ENCODE measurements at regions of chr7 and their contacts with region 1.

Region 1: GRCh38 chr7:126079581-126079980 is 1150.0 kb upstream of the POT1 start:
- DNase-seq: no peak
- ATAC-seq: no peak
- H3K4me3 ChIP-seq: no peak overlapping the region
- H3K4me3 Mint-ChIP-seq: no peak overlapping the region
- H3K27ac ChIP-seq: no peak overlapping the region
- H3K27ac Mint-ChIP-seq: no peak overlapping the region
- H3K4me1 ChIP-seq: no peaks in the 10 kb centered on the region
- H3K4me1 Mint-ChIP-seq: no peaks in the 10 kb centered on the region
- H3K27me3 ChIP-seq: no peaks in the 10 kb centered on the region
- H3K27me3 Mint-ChIP-seq: no peaks in the 10 kb centered on the region
- CTCF ChIP-seq: no peak

Region 2: DNA sequence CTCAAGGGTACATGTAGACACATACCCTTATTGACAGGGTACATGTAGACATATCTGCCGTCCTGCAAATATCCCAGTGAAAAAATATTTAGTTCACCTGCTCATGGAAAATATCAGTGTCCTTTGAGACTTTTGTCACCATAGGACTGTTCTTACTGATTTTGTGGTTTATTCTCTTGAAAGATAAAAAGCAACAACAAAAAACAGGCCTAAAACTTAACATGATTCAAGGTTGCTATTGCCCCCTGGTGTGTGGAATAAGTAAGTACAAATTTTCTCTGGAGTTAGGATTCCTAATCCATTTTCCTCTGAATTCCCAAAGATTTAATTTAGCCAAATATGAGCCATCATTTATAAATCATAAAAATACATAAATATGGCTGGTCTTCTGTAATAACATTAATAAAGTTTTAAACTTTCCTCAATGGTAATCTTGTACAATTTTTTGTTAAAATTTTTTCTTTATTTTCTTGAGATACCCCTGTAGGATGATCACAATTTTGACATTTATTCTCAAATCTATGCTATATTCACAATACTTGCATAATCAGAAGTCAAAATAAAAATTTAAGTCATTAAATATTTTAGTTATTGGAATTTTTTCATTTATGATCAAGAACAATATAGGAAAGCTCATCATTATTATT is 408.5 kb before region 1 on chr7:
- CTCF ChIA-PET with region 1: no interaction called
- POLR2A ChIA-PET with region 1: no interaction called
- intact Hi-C with region 1: no loop called
- DNase-seq: no peak
- ATAC-seq: no peak
- H3K4me3 ChIP-seq: no peak overlapping the region
- H3K4me3 Mint-ChIP-seq: no peak overlapping the region
- H3K27ac ChIP-seq: no peak overlapping the region
- H3K27ac Mint-ChIP-seq: no peak overlapping the region
- H3K4me1 ChIP-seq: no peaks in the 10 kb centered on the region
- H3K4me1 Mint-ChIP-seq: no peaks in the 10 kb centered on the region
- H3K27me3 ChIP-seq: no peaks in the 10 kb centered on the region
- H3K27me3 Mint-ChIP-seq: no peaks in the 10 kb centered on the region
- CTCF ChIP-seq: no peak

Region 3: DNA sequence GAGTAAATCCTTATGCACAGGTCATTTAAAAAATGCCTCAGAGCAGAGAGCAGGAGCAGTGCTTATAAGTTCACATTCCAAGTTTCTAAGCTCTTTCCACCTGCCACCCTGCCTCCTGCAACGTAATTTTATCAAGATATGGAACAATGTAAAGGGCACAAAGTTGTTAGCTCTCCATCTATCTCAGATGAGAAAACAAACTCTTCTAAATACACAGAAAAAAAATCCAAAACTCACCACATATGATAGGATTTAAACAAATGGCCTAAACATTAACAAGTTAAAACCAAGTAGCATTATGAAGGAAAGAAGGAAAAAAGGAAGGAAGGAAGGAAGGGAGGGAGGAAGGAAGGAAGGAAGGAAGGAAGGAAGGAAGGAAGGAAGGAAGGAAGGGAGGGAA is 40.4 kb after region 1 on chr7:
- CTCF ChIA-PET with region 1: no interaction called
- POLR2A ChIA-PET with region 1: no interaction called
- intact Hi-C with region 1: no loop called
- DNase-seq: no peak
- ATAC-seq: no peak
- H3K4me3 ChIP-seq: no peak overlapping the region
- H3K4me3 Mint-ChIP-seq: no peak overlapping the region
- H3K27ac ChIP-seq: no peak overlapping the region
- H3K27ac Mint-ChIP-seq: no peak overlapping the region
- H3K4me1 ChIP-seq: no peaks in the 10 kb centered on the region
- H3K4me1 Mint-ChIP-seq: no peaks in the 10 kb centered on the region
- H3K27me3 ChIP-seq: no peaks in the 10 kb centered on the region
- H3K27me3 Mint-ChIP-seq: no peaks in the 10 kb centered on the region
- CTCF ChIP-seq: no peak

Region 4: GRCh38 chr7:126140858-126141466 is 61.4 kb after region 1 on chr7:
- CTCF ChIA-PET with region 1: no interaction called
- POLR2A ChIA-PET with region 1: no interaction called
- intact Hi-C with region 1: loop called in 1 of 2 experiments (anchors 10 kb)
- DNase-seq: no peak
- ATAC-seq: no peak
- H3K4me3 ChIP-seq: no peak overlapping the region
- H3K4me3 Mint-ChIP-seq: no peak overlapping the region
- H3K27ac ChIP-seq: no peak overlapping the region
- H3K27ac Mint-ChIP-seq: no peak overlapping the region
- H3K4me1 ChIP-seq: no peaks in the 10 kb centered on the region
- H3K4me1 Mint-ChIP-seq: no peaks in the 10 kb centered on the region
- H3K27me3 ChIP-seq: no peaks in the 10 kb centered on the region
- H3K27me3 Mint-ChIP-seq: no peaks in the 10 kb centered on the region
- CTCF ChIP-seq: no peak